Ascending aorta (tissue), 2 donors: ENCODE measurements at regions of chr15 and their contacts with region 1.

Region 1: GRCh38 chr15:44222478-44222877 is 27.4 kb upstream of the FRMD5 start:
- DNase-seq: no peak
- H3K4me3 ChIP-seq: no peak overlapping the region
- H3K27ac ChIP-seq: no peak overlapping the region
- H3K4me1 ChIP-seq: no peaks in the 10 kb centered on the region
- H3K27me3 ChIP-seq: no peaks in the 10 kb centered on the region
- CTCF ChIP-seq: no peak

Region 2: DNA sequence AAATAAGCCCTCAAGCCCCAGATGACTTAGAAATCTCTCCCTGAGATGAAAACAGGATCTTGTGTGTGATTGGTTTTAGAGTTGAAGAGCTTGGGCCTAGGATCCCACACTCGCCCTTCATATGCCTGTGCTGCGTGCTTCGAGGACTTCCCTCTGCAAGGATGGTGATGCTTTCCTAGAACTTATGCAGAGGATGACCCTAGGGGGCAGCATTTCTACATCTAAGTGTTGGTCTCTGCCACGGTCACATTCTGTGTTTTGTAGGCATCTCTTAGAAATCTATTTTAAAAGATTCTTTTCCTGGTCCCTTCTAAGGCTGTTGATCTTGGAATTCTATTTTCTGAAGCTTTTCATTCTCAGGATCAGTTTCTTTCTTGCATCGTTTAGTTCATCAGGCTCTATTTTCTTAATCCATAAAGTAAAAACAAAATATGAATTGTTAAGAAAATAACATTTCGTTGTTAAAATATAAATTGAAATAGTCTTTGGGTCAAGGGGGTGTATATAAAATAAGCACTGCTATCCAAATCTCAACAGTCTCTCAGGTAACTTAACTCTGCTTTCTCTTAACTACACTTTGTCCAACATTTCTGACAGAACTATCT is 350.0 kb before region 1 on chr15:
- intact Hi-C with region 1: loop called (anchors 10 kb)
- DNase-seq: no peak
- H3K4me3 ChIP-seq: no peak overlapping the region
- H3K27ac ChIP-seq: no peak overlapping the region
- H3K4me1 ChIP-seq: no peaks in the 10 kb centered on the region
- H3K27me3 ChIP-seq: no peaks in the 10 kb centered on the region
- CTCF ChIP-seq: peak in 2 of 3 experiments; percentile 32 to 64

Region 3: DNA sequence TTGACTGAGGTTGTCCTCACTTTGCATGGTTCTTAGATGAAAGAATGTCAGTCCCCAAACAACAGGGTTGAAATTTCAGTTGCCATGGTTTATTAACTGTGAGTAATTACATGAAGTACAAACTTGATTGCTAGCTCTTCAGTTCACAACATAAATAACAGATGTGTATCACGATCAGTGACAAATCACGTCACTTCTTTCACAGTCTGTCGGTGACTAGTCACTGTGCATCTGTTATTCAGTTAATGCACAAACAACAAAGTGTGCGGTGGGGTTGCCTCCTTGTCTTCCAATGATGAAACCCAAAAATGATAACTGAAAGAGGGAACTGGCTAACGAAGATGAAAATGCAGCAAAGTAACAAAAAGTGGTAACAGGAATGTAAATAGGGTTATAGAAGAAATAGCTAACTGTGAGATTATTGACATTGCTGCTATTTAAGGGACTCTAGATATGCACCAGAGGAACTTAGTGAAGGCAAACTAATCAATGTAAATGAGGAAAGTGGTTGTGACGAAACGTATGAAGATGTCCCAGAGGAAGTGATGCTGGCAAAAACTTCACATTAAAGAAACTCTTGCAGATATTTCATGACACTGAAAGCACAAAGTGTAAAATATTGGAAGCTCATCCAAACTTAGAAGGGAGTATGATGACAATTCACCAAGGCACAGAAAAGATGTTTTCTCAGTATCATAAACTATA is 236.3 kb before region 1 on chr15:
- intact Hi-C with region 1: loop called (anchors 10 kb)
- DNase-seq: no peak
- H3K4me3 ChIP-seq: no peak overlapping the region
- H3K27ac ChIP-seq: no peak overlapping the region
- H3K4me1 ChIP-seq: no peaks in the 10 kb centered on the region
- H3K27me3 ChIP-seq: no peaks in the 10 kb centered on the region
- CTCF ChIP-seq: no peak

Region 4: DNA sequence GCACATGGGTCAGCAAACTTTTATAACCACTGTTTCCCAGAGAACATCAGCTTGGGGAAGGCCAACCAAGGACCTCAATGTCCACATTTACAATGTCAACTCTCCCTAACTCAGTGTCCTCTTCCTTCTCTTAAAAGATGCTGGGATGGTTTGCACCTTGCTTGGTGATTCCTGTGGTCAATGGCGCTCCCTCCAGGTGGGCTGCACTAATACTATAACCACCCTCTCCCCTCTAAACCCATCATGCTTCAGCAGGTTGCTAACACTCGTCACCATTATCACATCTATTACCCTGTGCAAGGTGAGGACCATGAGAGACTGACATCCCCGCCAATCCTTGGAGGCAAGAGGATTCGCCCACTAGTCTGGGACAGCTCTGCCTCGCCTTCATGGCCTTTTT is 92.6 kb before region 1 on chr15:
- intact Hi-C with region 1: loop called (anchors 10 kb)
- DNase-seq: no peak
- H3K4me3 ChIP-seq: no peak overlapping the region
- H3K27ac ChIP-seq: no peak overlapping the region
- H3K4me1 ChIP-seq: no peaks in the 10 kb centered on the region
- H3K27me3 ChIP-seq: no peaks in the 10 kb centered on the region
- CTCF ChIP-seq: no peak

Region 5: GRCh38 chr15:44532689-44533088 is 310.2 kb after region 1 on chr15:
- intact Hi-C with region 1: no loop called
- DNase-seq: no peak
- H3K4me3 ChIP-seq: no peak overlapping the region
- H3K27ac ChIP-seq: no peak overlapping the region
- H3K4me1 ChIP-seq: peaks cover 2 to 12% of the 10 kb centered on the region in 2 donors
- H3K27me3 ChIP-seq: no peaks in the 10 kb centered on the region
- CTCF ChIP-seq: no peak